ENCODE measurements at regions of chr20 and their contacts with region 1.

Region 1: DNA sequence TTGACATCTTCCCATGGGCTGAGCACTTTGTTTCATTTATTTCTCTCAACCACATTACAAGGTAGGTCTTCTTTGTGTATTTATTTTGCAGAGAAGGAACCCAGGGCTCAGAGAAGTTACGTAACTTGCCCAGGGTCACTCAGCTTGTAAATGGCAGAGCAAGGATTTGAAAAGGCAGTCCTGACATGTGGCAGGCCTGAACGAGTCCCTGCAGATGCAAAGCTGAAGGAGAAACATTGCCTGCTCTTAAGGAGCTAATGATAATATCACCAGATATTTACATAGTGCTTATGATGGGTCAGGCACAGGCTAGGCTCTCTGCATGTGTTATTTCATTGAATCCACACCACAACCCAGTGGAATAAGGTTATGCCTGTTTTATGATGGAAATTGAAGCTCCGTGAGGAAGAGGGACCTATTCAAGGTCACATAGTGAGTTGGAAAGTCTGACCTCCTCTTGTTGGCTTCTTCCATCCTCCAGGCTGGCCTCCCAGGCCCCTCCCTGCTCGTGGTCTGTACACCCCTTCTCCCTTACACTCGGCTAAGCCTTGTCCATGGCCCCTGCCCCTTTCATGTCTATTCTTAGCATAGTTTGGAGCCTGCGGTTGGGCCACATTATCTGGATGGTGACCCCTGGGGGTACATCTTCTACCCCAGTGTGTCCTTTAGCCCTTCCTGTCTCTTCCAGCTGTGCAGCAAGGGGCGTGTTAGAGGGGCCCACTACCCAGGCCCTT is 12.5 kb downstream of the MYH7B start:
- DNase-seq: no peak
- ATAC-seq: no peak; the same call in 1 of the 2 replicates
- H3K4me3 ChIP-seq: no peak overlapping the region
- H3K27ac ChIP-seq: no peak overlapping the region
- H3K4me1 ChIP-seq: no peaks in the 10 kb centered on the region
- H3K27me3 ChIP-seq: peaks cover 14% of the 10 kb centered on the region
- CTCF ChIP-seq: no peak
- POLR2A ChIP-seq: no peak
- RAD21 ChIP-seq: no peak

Region 2: DNA sequence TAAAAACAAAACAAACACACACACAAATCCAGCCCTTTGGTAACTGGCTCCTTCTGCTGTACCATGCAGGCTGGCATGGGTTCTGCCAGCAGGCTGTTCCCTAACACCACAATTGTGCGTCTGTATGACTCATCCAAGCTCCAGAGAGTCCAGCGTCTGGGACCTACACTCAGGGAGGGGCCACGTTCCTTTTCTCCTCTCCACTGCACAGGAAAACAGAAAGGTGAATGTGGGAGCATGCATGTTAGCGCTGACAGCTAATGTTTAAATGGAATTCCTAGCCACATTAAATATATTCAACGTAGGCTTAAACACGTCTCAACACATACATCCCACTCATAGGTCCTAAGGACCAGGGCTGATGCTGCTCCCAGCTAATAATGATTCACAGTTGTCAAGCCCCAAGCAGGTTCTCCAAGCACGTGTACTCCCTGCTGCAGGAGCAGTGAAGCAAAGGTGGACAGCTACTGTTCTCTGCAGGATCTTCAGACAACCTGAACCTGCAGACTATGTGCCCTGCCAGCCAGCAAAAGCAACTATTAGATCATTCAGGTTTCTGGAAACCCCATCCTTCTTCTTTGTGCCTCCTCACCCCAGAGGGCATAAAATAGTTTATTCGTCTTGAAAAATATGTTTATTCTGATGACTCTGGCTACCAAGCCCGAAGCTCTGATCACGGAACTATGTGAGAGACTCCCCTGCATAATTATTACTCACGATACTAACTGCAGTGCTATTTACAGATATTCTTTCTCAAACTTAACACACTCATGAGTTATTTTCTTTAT is 388.8 kb before region 1 on chr20:
- CTCF ChIA-PET with region 1: no interaction called
- POLR2A ChIA-PET with region 1: no interaction called
- dilution Hi-C with region 1: no loop called
- in situ Hi-C with region 1: no loop called
- intact Hi-C with region 1: loop called (anchors 10 kb)
- DNase-seq: peak; percentile 82
- ATAC-seq: peak; percentile 89
- H3K4me3 ChIP-seq: no peak overlapping the region
- H3K27ac ChIP-seq: no peak overlapping the region
- H3K4me1 ChIP-seq: peaks cover 17% of the 10 kb centered on the region
- H3K27me3 ChIP-seq: no peaks in the 10 kb centered on the region
- CTCF ChIP-seq: peak; percentile 84
- POLR2A ChIP-seq: no peak
- RAD21 ChIP-seq: peak; percentile 89

Region 3: DNA sequence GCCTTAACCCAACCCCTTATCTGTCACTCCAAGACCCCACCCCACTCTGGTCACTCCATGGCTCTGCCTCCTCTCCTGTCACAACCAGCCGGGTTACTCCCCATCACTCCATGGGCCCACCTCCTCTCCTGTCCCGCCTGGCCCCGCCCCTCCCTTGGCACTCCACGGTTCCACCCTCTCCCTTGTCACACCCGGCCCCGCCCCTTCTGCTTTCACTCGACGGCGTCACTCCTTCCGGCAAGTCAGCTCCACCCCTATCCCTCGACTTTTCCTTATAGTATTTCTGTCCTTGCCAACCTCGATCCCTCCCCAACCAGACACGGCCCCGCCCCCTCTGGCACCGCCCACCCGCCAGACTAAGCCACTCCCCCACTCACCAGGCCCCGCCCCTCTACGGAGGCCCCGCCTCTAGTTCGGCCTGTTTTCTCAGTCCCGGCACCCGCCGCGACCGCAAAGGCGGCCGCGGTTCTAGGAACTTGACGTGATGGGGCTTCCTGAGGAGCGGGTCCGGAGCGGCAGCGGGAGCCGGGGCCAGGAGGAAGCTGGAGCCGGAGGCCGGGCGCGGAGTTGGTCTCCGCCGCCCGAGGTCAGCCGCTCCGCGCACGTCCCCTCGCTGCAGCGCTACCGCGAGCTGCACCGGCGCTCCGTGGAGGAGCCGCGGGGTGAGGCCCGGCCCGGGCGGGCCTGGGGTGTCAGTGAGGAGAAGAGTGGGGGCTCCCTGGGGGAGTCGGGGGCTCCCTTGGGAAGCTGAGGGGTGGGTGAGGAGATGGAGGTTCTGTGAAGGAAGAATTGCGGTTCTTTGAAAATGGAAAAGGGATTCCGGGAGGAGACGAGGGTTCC is 91.8 kb before region 1 on chr20 and contains the start of gene ACSS2:
- CTCF ChIA-PET with region 1: no interaction called
- POLR2A ChIA-PET with region 1: no interaction called
- dilution Hi-C with region 1: no loop called
- in situ Hi-C with region 1: no loop called
- intact Hi-C with region 1: no loop called
- DNase-seq: peak; percentile 97
- ATAC-seq: peak; percentile 88
- H3K4me3 ChIP-seq: peak within 1 kb of the TSS; percentile 67
- H3K27ac ChIP-seq: peak within 1 kb of the TSS; percentile 30
- H3K4me1 ChIP-seq: peaks cover 14% of the 10 kb centered on the region
- H3K27me3 ChIP-seq: no peaks in the 10 kb centered on the region
- CTCF ChIP-seq: no peak
- POLR2A ChIP-seq: peak; percentile 65; the same call in 1 of the 2 replicates
- RAD21 ChIP-seq: no peak
- total RNA-seq, gene ACSS2: 38.9 and 46.4 TPM in 2 replicates

Measured in IMR-90 (cell line).